Activated CD4-positive, alpha-beta T cell treated with anti-CD3 and anti-CD28 coated beads, Interleukin-2, amount 10 ng/mL, durations not matched to agents 7 days and 5 days (primary cell): ENCODE measurements at regions of chr1 and their contacts with region 1.

Region 1: DNA sequence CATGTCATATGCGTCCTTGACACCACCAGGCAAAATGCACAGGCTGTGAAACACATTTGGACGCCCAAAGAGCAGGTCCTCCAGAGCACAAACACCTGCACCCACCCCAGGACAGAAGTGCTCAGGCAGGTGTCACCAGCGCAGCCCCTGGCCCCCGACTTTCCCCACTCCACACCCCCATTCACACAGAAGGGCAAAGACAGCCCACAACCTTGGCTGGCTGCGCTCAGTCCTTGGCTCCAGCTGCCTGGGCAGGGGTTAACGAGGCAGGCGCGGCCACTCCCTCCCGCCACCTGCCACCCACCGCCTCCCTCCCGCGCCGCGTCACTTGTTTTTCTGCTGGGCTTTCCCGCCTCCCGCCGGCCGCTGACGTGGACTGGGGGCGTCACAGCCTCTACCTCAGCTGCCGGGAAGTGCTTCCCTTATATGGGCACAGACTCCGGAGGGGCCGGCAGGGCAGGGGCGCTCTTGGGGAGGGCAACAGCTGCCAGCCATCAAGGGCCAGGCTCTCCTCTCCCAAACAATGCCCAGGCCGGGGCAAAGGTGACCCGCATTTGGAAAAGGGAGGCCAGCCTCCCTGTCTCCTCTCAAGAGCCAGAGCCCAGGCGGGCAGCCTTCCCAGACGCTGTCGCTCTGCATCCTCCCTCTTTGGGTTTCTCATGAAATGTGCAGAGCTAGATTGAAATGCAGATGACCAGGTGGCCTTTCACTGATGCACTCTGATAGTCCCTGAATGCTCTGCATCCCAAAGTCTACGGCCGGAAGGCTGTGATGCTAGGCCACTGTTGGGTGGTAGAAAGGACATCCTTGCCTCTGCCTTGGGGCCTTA is 14.8 kb upstream of the BTG2 start:
- DNase-seq: peak; percentile 97
- H3K4me3 Mint-ChIP-seq: peak overlapping the region; percentile 67
- H3K27ac Mint-ChIP-seq: peak overlapping the region; percentile 99
- H3K4me1 Mint-ChIP-seq: peaks cover 77% of the 10 kb centered on the region
- H3K27me3 Mint-ChIP-seq: no peaks in the 10 kb centered on the region

Region 2: DNA sequence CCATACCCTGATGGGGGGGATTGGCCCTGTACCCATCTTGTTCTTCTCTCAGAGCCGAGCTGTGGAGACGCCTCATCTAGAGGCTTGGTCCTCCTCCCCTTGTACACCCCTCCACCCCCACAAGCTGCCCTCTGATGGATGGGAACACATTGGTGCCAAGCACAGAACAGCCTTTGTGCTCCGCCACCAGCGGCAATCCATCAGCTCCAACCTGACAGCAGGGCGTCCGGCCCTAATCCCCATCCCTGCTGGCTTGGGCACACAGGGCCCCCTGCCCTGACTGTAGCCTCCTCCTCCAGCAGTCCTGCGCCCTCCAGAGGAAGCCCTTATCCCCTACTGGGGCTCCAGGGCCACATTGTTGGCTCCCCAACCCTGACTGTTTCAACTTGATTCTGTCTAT is 200.8 kb before region 1 on chr1:
- CTCF ChIA-PET with region 1: no interaction called
- POLR2A ChIA-PET with region 1: no interaction called
- DNase-seq: peak; percentile 3
- H3K4me3 Mint-ChIP-seq: no peak overlapping the region
- H3K27ac Mint-ChIP-seq: no peak overlapping the region
- H3K4me1 Mint-ChIP-seq: no peaks in the 10 kb centered on the region
- H3K27me3 Mint-ChIP-seq: peaks cover 20% of the 10 kb centered on the region

Region 3: DNA sequence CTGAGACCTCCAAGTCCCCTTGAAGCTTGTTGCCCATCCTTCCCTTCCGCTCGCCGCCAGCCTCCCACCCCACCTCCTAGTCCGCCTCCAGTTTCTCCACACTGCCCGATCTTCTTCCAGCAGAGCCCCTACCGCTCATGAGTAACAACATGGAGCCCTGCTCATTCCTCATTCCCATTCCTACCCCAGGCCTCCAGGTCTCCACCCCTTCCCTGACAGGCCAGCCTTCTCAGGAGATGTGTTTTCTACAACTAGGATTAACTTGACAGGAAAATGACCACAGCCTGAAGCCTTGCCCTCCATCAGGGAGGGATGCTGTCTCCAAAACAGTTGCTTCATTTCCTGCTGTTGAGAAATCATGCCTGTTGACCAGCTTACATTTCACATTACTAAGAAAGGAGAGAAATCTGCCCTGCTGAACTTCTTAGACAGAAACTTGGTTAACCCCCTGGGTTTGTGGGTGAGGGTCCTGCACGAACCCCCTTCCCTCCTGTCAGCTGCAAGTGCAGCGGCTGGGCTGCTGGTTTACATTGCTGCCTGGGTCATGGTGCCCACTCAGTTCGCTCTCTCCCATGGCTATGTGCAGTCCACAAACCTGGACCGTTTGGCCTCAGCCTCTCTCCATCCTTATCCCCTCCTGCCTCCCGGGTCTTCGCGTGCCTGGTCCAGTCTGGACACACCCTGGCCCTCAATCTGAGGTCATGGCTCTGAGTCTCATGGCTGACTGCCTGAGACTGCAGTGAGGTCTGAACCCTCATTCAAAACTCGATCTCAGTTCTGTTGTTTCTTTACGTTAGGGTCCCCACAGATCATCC is 87.8 kb before region 1 on chr1:
- CTCF ChIA-PET with region 1: no interaction called
- POLR2A ChIA-PET with region 1: no interaction called
- DNase-seq: no peak
- H3K4me3 Mint-ChIP-seq: no peak overlapping the region
- H3K27ac Mint-ChIP-seq: no peak overlapping the region
- H3K4me1 Mint-ChIP-seq: no peaks in the 10 kb centered on the region
- H3K27me3 Mint-ChIP-seq: peaks cover 19% of the 10 kb centered on the region

Region 4: GRCh38 chr1:203320591-203321272 is 30.3 kb after region 1 on chr1:
- CTCF ChIA-PET with region 1: interaction called, 14 read pairs
- POLR2A ChIA-PET with region 1: no interaction called
- DNase-seq: peak; percentile 89
- H3K4me3 Mint-ChIP-seq: peak overlapping the region; percentile 39
- H3K27ac Mint-ChIP-seq: peak overlapping the region; percentile 95
- H3K4me1 Mint-ChIP-seq: peaks cover 78% of the 10 kb centered on the region
- H3K27me3 Mint-ChIP-seq: no peaks in the 10 kb centered on the region